ENCODE measurements at regions of chr17 and their contacts with region 1.

Region 1: GRCh38 chr17:30291543-30292285 is at the start of gene BLMH:
- DNase-seq: peak; percentile 74
- ATAC-seq: peak; percentile 97
- H3K4me3 Mint-ChIP-seq: peak within 1 kb of the TSS; percentile 91
- H3K27ac Mint-ChIP-seq: peak within 1 kb of the TSS; percentile 51
- H3K4me1 Mint-ChIP-seq: peaks cover 12% of the 10 kb centered on the region
- H3K27me3 Mint-ChIP-seq: no peaks in the 10 kb centered on the region
- CTCF ChIP-seq: no peak
- total RNA-seq, gene BLMH: 38.0 and 40.3 TPM in 2 replicates

Region 2: DNA sequence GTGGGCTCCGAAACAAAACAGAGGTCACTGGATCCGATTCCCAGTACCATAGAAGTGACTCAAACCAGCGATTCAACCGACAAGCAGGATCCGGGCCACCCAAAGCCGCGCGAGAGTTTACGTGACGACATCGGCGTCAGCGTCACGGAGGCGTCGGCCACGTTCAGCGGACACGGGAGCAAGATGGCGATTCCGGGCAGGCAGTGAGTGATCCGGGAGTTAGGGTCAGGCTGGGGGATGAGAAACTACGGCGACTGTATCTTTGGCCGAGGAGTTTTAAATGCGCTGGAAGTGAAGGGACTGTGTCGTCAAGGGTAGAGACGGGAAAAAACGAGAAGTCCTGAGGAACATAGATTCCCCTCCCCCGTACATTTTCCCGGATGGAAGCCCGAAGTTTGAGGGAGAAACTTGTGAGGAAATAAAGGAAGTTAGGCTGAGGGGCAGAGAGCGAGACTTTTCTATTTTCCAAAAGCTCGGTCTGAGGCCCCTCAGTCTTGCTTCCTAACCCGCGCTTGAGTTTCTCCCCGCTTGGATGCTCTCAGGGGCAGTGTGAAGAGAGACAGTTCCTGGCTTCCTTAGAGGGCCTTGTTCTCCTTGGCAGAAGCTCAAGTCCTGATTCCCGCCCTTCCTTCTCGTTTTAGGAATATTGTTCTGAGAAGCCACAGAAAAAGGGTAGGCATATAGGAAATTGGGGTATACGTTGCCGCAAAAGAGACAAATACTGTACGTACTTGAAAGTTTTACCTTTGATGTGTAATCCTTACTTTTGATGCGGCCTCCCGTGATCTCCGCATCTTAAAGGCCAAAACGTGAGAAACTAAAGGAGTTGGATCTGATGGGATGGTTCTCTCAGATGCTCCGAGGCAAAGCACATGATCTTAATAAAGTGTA is 174.8 kb before region 1 on chr17 and contains the start of gene NSRP1:
- CTCF ChIA-PET with region 1: no interaction called
- POLR2A ChIA-PET with region 1: no interaction called
- intact Hi-C with region 1: loop called (anchors 5 kb)
- DNase-seq: peak; percentile 84
- ATAC-seq: peak; percentile 96
- H3K4me3 Mint-ChIP-seq: peak within 1 kb of the TSS; percentile 97
- H3K27ac Mint-ChIP-seq: peak within 1 kb of the TSS; percentile 97
- H3K4me1 Mint-ChIP-seq: peaks cover 41% of the 10 kb centered on the region
- H3K27me3 Mint-ChIP-seq: no peaks in the 10 kb centered on the region
- CTCF ChIP-seq: no peak
- total RNA-seq, gene NSRP1: 35.3 and 44.2 TPM in 2 replicates

Region 3: DNA sequence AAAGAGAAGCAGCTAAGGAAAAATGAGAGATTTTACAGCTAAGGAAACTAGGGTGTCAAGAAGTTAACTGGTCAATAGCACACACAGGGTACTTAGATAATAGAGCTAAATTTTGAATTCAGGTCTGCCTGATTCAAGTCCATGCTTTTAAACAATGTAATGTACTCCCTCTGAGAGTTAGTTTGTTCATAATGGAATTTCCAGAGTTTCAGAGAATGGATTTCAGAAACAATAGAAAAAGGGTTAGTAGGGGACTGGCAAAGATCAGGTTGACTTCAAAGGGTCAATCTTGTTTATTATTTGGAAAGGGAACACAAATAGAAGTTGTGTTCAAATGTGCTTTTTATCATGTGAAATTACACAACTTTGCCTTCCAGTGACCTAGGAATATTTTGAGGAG is 157.2 kb before region 1 on chr17:
- CTCF ChIA-PET with region 1: no interaction called
- POLR2A ChIA-PET with region 1: no interaction called
- intact Hi-C with region 1: no loop called
- DNase-seq: no peak
- ATAC-seq: no peak
- H3K4me3 Mint-ChIP-seq: no peak overlapping the region
- H3K27ac Mint-ChIP-seq: no peak overlapping the region
- H3K4me1 Mint-ChIP-seq: peaks cover 7% of the 10 kb centered on the region
- H3K27me3 Mint-ChIP-seq: no peaks in the 10 kb centered on the region
- CTCF ChIP-seq: no peak

Region 4: GRCh38 chr17:30323895-30324319 is 32.2 kb after region 1 on chr17:
- CTCF ChIA-PET with region 1: no interaction called
- POLR2A ChIA-PET with region 1: no interaction called
- intact Hi-C with region 1: no loop called
- DNase-seq: no peak
- ATAC-seq: peak; percentile 21
- H3K4me3 Mint-ChIP-seq: no peak overlapping the region
- H3K27ac Mint-ChIP-seq: no peak overlapping the region
- H3K4me1 Mint-ChIP-seq: peaks cover 10% of the 10 kb centered on the region
- H3K27me3 Mint-ChIP-seq: no peaks in the 10 kb centered on the region
- CTCF ChIP-seq: no peak

Region 5: DNA sequence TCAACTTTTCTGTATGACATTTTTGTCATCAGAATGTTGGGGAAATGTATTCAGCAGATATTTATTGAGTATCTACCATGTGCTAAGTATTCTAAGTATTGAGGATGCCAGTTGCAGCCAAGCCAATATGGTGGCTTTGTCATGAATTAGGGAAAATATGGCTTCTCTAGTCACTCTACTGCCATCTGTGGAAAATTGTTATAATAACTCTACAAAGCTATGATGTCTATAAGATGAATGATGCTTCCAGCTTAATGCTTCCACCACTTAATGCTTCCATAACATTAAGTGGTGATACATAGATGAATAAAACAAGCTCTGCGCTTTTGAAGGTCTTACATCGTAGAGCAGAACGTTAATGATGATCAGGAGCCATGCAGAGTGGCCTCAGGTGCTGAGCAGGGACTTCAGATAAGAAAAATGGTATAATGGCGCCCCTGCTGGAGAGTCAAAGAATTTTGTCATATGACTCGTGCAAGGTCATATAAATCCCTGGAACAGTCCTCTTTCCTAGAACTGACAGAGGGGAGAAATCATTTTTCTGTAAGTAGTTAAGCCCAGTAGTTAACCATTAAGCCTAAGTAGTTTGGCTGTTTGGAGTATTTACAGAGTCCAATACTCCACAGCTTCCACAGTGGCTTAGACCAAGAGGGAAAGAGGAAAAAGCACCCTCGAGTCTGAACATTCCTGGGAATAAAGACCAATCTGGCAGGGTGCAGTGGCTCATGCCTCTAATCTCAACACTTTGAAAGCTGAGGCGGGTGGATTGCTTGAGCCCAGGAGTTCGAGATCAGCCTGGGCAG is 44.9 kb after region 1 on chr17:
- CTCF ChIA-PET with region 1: interaction called, 6 read pairs
- POLR2A ChIA-PET with region 1: interaction called, 5 read pairs
- intact Hi-C with region 1: loop called (anchors 2 kb)
- DNase-seq: no peak
- ATAC-seq: peak; percentile 51
- H3K4me3 Mint-ChIP-seq: no peak overlapping the region
- H3K27ac Mint-ChIP-seq: no peak overlapping the region
- H3K4me1 Mint-ChIP-seq: peaks cover 19% of the 10 kb centered on the region
- H3K27me3 Mint-ChIP-seq: peaks cover 6% of the 10 kb centered on the region
- CTCF ChIP-seq: peak; percentile 32